Activated CD8-positive, alpha-beta T cell treated with anti-CD3 and anti-CD28 coated beads for 36 hours (primary cell): ENCODE measurements at regions of chr14 and their contacts with region 1.

Region 1: DNA sequence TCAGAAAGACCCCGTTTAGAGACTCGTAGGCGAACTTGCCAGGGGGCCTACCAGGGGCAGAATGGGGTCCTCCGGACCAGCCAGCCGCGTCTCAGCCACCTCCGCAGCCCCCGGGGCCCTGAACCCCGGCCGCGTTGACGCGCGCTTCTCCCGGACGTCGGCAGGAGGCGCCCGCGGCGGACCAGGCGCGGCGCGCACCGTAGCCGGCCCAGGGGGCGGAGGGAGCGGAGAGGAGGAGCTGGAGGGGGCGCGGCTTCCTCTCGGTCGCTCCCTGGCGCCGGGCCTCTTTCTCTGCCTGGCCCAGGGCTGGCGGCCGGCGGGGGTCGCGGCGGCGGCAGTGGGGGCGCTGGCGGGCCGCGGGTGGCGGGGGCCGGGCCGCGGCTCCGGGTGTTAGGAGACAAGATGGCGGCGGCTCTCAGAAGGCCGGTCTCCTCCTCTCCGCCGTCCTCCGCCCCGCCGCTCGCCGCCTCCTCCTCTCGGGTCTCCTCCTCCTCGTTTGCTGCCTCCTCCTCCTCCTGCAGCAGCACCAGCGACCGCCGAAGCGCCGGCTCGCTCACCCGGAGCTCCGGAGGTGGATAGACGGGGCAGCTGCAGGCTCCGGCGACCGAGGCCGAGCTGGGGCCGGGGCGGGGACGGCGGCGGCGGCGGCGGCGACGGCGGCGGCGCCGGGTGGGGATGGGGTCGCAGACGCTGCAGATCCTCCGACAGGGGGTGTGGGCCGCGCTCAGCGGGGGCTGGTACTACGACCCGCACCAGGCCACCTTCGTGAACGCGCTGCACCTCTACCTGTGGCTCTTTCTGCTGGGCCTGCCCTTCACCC is at the start of gene PCNX1:
- DNase-seq: peak; percentile 90
- ATAC-seq: peak; percentile 80
- H3K4me3 Mint-ChIP-seq: peak within 1 kb of the TSS; percentile 97
- H3K27ac Mint-ChIP-seq: peak within 1 kb of the TSS; percentile 92
- H3K4me1 Mint-ChIP-seq: peaks cover 64% of the 10 kb centered on the region
- H3K27me3 Mint-ChIP-seq: no peaks in the 10 kb centered on the region
- CTCF ChIP-seq: peak; percentile 76
- total RNA-seq, gene PCNX1: 32.7 to 42.6 TPM

Region 2: DNA sequence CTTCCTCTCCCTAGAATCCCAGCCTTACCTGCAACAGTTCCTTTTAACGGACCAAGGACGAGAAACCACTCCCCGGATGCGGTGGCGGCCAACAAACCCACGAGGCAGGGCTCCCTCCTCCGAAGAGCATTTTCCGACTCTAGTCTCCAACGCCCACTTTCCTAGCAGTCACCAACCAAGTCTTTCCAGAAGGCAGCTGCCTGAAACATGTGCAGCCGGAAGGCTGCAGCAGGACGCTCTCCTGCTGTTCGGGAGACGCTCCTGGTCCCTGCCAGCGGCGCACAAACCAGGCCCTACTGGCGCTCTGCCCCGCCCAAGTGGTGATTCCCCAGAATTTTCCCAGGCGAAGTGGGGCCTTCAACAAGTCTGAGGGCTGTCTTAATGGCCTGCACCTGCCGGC is 351.5 kb before region 1 on chr14:
- CTCF ChIA-PET with region 1: no interaction called
- POLR2A ChIA-PET with region 1: no interaction called
- intact Hi-C with region 1: no loop called
- DNase-seq: no peak
- ATAC-seq: no peak
- H3K4me3 Mint-ChIP-seq: no peak overlapping the region
- H3K27ac Mint-ChIP-seq: no peak overlapping the region
- H3K4me1 Mint-ChIP-seq: peaks cover 3% of the 10 kb centered on the region
- H3K27me3 Mint-ChIP-seq: no peaks in the 10 kb centered on the region
- CTCF ChIP-seq: no peak

Region 3: GRCh38 chr14:70721542-70721941 is 185.8 kb before region 1 on chr14:
- CTCF ChIA-PET with region 1: no interaction called
- POLR2A ChIA-PET with region 1: no interaction called
- intact Hi-C with region 1: no loop called
- DNase-seq: no peak
- ATAC-seq: no peak
- H3K4me3 Mint-ChIP-seq: no peak overlapping the region
- H3K27ac Mint-ChIP-seq: no peak overlapping the region
- H3K4me1 Mint-ChIP-seq: no peaks in the 10 kb centered on the region
- H3K27me3 Mint-ChIP-seq: no peaks in the 10 kb centered on the region
- CTCF ChIP-seq: no peak

Region 4: DNA sequence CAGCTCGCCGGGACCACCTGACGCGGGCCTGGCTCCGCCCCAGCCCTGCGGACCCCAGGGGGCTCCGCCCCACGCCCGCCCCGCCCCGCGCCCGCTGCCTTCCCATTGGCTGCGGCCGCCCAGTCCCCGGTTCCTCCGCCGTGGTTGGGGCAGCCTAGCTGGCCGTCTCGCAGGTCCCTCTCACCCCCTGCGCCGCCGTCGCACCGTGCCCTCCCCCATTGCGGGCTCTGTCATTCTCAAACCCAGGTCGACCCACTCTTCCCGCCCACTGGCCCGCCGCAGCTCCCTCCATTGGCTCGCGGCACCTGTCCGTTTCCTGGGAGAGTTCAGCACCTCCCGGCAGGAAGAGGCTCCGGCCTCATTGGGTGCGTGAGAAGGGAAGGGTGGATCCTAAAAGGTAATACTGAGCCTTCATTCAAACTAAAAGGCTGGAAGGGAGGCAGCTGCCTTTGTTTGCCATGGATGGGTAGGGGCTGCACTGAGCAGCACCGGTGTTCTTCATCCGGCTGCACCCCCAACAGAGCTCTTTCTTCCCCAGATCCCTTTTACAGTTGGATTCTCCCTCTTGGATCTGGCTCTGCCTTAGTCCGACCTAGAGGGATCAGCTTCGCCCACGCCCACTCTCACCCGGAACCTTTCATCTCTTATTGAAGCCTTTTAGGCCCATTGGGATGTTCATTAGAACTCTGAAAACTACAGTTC is 97.7 kb before region 1 on chr14:
- CTCF ChIA-PET with region 1: interaction called, 13 read pairs
- POLR2A ChIA-PET with region 1: interaction called, 3 read pairs
- intact Hi-C with region 1: no loop called
- DNase-seq: peak; percentile 97
- ATAC-seq: peak; percentile 88
- H3K4me3 Mint-ChIP-seq: no peak overlapping the region
- H3K27ac Mint-ChIP-seq: peak overlapping the region; percentile 87
- H3K4me1 Mint-ChIP-seq: peaks cover 14% of the 10 kb centered on the region
- H3K27me3 Mint-ChIP-seq: no peaks in the 10 kb centered on the region
- CTCF ChIP-seq: no peak

Region 5: DNA sequence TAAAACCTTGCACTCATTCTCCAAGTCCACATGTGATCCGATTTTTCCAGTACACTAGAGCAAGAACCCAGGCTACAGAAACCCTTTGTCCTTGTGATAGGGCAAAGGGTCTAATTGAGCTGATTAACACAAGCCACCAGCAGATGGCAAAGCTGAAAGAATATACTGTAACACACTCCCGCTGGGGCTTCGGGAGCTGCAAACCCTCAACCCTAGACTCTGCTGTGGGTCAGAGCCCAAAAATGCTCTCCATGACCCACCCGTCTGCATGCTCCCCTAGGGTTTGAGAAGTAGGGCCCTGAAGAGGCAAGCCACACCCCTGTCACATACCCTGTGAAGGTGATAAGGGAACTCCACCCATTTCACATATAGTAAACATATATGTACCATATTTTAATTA is 33.8 kb before region 1 on chr14:
- CTCF ChIA-PET with region 1: interaction called, 13 read pairs
- POLR2A ChIA-PET with region 1: interaction called, 4 read pairs
- intact Hi-C with region 1: no loop called
- DNase-seq: peak; percentile 30
- ATAC-seq: no peak
- H3K4me3 Mint-ChIP-seq: no peak overlapping the region
- H3K27ac Mint-ChIP-seq: no peak overlapping the region
- H3K4me1 Mint-ChIP-seq: peaks cover 19% of the 10 kb centered on the region
- H3K27me3 Mint-ChIP-seq: no peaks in the 10 kb centered on the region
- CTCF ChIP-seq: no peak

Region 6: GRCh38 chr14:70919774-70920173 is 12.4 kb after region 1 on chr14:
- CTCF ChIA-PET with region 1: interaction called, 18 read pairs
- POLR2A ChIA-PET with region 1: interaction called, 7 read pairs
- intact Hi-C with region 1: no loop called
- DNase-seq: peak; percentile 29
- ATAC-seq: no peak
- H3K4me3 Mint-ChIP-seq: peak overlapping the region; percentile 43
- H3K27ac Mint-ChIP-seq: peak overlapping the region; percentile 91
- H3K4me1 Mint-ChIP-seq: peaks cover 84% of the 10 kb centered on the region
- H3K27me3 Mint-ChIP-seq: no peaks in the 10 kb centered on the region
- CTCF ChIP-seq: no peak

Region 7: DNA sequence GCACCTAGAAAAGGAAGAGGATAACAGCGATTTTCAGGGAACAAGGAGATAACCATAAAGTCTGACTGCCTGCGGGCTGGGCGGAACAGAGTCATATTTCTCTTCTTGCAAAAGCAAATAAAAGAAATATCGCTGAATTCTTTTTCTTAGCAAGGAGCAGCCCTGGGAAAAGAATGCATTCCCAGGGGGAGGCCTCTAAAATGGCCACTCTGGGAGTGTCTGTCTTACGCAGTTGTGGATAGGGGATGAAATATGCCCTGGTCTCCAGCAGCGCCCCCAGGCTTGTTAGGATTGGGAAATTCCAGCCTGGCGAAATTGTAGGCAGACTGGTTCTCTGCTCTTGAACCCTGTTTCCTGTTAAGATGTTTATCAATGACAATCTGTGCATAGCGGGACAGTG is 40.3 kb after region 1 on chr14:
- CTCF ChIA-PET with region 1: interaction called, 98 read pairs
- POLR2A ChIA-PET with region 1: interaction called, 8 read pairs
- intact Hi-C with region 1: no loop called
- DNase-seq: no peak
- ATAC-seq: no peak
- H3K4me3 Mint-ChIP-seq: no peak overlapping the region
- H3K27ac Mint-ChIP-seq: peak overlapping the region; percentile 6
- H3K4me1 Mint-ChIP-seq: peaks cover 23% of the 10 kb centered on the region
- H3K27me3 Mint-ChIP-seq: no peaks in the 10 kb centered on the region
- CTCF ChIP-seq: no peak

Region 8: DNA sequence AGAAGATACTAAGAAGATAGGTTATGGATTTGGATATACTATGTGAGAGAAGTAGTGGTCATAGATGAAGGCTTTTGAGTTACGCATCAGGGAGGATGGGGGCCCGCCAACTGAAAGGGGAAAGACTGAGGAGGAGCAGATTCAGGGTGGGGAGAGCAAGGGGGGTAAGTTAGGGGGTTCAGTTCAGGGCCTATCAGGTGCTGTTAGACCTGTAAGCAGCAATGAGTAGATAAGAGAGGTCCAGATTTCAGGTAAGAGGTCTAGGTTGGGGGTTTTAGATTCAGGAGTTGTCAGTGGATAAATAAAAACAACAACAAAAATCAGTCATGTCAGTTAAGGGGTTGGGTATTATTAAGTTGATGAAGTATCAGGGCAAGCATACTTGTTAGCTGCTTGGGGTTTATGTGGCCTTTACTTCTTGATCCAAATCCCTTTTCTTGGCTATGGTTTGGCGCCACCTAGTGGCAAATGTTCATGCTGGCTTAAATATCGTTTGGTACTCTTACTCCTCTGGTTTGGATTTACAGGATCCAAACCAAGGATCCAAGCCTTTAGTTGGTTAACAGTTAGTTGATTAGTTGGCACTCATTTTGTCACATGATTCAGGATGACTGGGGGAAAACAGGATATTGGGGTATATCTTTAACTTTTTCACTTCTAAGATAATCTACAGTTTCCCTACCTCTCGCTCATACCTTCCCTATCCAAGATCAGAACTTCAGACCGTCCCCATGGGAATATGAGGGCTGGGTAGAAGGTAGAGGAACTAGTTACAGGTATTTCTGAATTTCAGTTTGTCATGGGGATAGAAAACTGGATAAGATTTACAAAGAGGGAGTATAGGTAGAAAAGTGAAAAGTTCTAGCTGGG is 65.0 kb after region 1 on chr14:
- CTCF ChIA-PET with region 1: interaction called, 21 read pairs
- POLR2A ChIA-PET with region 1: interaction called, 3 read pairs
- intact Hi-C with region 1: loop called (anchors 5 kb)
- DNase-seq: peak; percentile 94
- ATAC-seq: peak; percentile 78
- H3K4me3 Mint-ChIP-seq: no peak overlapping the region
- H3K27ac Mint-ChIP-seq: peak overlapping the region; percentile 57
- H3K4me1 Mint-ChIP-seq: peaks cover 40% of the 10 kb centered on the region
- H3K27me3 Mint-ChIP-seq: no peaks in the 10 kb centered on the region
- CTCF ChIP-seq: peak; percentile 83